Activated CD4-positive, alpha-beta T cell treated with anti-CD3 and anti-CD28 coated beads for 36 hours (primary cell): ENCODE measurements at regions of chr15 and their contacts with region 1.

Region 1: DNA sequence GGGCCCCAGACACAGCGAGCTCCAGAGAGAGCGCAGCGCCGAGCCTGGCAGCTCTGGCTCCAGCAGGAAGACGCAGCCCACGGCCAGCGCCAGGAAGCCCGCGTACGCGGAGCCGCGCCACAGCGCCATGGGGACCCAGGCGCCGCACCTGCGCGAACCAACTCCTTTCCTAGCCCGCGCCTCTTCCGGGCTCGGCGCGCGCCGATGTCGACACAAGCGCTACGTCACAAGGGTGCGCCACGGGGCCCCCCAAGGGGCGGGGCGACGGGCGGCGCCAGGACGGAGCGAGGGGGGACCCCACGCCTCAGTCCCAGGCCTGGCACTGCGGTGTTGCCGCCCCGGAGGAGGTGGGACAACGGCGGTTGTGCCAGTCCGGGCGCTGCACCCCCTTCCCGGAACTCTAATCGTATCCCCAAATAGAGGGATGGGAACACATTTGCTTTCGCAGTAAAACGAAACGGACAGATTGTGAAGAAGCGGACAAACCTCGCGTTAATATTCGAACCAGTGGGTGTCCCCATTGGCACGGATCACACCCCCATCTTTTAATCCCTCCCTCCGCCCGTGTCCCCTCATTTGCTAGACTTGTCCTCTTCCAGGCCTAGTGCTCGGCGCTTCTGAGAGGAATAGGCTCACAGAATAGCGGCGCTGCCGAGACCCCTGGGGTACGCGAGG is at the start of gene ADPGK:
- DNase-seq: peak; percentile 95
- ATAC-seq: peak; percentile 80
- H3K4me3 Mint-ChIP-seq: peak within 1 kb of the TSS; percentile 97
- H3K27ac Mint-ChIP-seq: peak within 1 kb of the TSS; percentile 99
- H3K4me1 Mint-ChIP-seq: peaks cover 60% of the 10 kb centered on the region
- H3K27me3 Mint-ChIP-seq: no peaks in the 10 kb centered on the region
- total RNA-seq, gene ADPGK: 58.0 to 70.8 TPM

Region 2: GRCh38 chr15:72375847-72376581 is 407.7 kb before region 1 on chr15 and contains the start of gene HEXA:
- CTCF ChIA-PET with region 1: no interaction called
- POLR2A ChIA-PET with region 1: no interaction called
- intact Hi-C with region 1: loop called in 1 of 2 experiments (anchors 1 kb)
- DNase-seq: peak; percentile 99
- ATAC-seq: peak; percentile 83
- H3K4me3 Mint-ChIP-seq: peak within 1 kb of the TSS; percentile 89
- H3K27ac Mint-ChIP-seq: peak within 1 kb of the TSS; percentile 96
- H3K4me1 Mint-ChIP-seq: peaks cover 45% of the 10 kb centered on the region
- H3K27me3 Mint-ChIP-seq: no peaks in the 10 kb centered on the region
- total RNA-seq, gene HEXA: 38.8 to 54.2 TPM

Region 3: DNA sequence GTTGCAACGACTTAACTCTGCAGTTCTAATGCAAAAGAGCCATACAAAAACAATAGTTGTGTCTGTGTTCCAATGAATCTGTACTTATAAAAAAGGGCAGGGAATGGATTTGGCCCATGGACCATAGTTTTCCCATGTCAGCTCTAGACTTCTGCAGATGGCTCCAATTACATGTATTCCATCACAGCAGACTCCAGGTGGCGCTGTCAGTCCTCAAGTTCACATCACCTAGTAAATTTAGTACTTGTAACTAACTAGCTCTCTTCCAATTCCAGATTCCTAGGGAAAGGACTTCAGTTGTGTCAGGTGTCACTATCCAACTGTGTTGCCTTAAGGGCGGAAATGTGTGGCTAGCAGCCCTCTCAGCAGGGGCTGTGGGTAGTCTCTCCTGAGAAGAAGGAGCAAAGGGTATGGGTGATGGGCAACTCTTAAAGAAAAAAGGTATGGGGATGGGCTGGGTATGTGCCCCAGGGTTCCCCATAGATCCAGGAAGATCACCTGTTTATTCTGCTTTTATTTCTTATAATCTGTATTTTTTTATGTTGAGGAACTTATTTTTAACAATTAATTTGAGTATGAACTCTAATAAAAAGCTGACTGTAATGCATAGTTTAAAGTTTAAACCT is 61.5 kb before region 1 on chr15:
- CTCF ChIA-PET with region 1: interaction called, 5 read pairs
- POLR2A ChIA-PET with region 1: no interaction called
- intact Hi-C with region 1: loop called (anchors 1 kb)
- DNase-seq: peak; percentile 85
- ATAC-seq: peak; percentile 42
- H3K4me3 Mint-ChIP-seq: no peak overlapping the region
- H3K27ac Mint-ChIP-seq: no peak overlapping the region
- H3K4me1 Mint-ChIP-seq: no peaks in the 10 kb centered on the region
- H3K27me3 Mint-ChIP-seq: no peaks in the 10 kb centered on the region

Region 4: GRCh38 chr15:72796515-72797337 is 13.0 kb after region 1 on chr15:
- CTCF ChIA-PET with region 1: interaction called, 14 read pairs
- POLR2A ChIA-PET with region 1: interaction called, 3 read pairs
- intact Hi-C with region 1: loop called in 1 of 2 experiments (anchors 2 kb)
- DNase-seq: peak; percentile 58
- ATAC-seq: peak; percentile 82
- H3K4me3 Mint-ChIP-seq: peak overlapping the region; percentile 67
- H3K27ac Mint-ChIP-seq: no peak overlapping the region
- H3K4me1 Mint-ChIP-seq: peaks cover 9% of the 10 kb centered on the region
- H3K27me3 Mint-ChIP-seq: peaks cover 24% of the 10 kb centered on the region

Region 5: DNA sequence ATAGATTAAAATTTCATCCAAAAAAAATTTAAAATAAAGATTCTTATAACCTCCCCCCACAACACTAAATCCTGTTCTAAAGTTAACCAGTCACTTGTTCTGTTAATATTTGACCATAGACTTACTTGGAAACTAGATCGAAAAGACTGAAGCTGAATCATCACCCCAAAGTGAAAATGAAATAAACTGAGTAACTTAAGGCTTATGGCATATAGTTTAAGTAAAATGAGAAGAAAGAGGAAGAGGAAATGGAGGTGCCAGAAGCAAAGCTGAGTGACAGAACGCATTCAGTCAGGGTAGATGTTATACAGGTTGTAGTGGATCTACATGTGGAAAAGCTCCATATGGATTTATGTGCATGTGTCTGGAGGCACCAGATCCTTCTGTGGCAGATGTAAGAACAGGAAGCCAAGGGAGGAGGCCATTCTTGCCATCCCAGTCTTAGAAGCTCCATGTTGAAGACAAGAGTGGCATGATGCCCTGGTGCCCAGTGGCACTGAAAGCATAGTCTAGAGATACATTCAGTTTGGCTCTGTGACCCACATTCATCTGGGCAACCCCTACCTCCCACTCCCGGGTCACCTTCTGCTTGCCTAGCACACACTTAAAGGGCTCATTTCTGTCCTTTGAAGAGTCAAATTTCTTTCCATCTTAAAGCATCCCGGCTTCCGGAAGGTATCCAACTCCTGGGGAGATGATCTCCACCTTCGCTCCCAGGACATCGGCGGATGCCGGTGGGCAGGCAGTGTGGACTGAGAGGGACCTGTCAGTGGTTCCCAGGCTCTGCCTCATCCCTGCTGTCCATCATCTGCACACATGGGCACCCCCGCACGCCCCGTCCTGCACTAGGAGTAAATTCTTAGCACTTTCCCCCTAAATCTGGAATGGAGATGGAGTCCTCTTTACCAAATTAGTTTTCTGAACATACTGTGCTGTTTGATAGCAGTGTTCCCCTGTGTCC is 359.4 kb after region 1 on chr15:
- CTCF ChIA-PET with region 1: no interaction called
- POLR2A ChIA-PET with region 1: no interaction called
- intact Hi-C with region 1: loop called in 1 of 2 experiments (anchors 1 kb)
- DNase-seq: peak; percentile 12
- ATAC-seq: peak; percentile 81
- H3K4me3 Mint-ChIP-seq: no peak overlapping the region
- H3K27ac Mint-ChIP-seq: peak overlapping the region; percentile 87
- H3K4me1 Mint-ChIP-seq: peaks cover 43% of the 10 kb centered on the region
- H3K27me3 Mint-ChIP-seq: no peaks in the 10 kb centered on the region

Region 6: DNA sequence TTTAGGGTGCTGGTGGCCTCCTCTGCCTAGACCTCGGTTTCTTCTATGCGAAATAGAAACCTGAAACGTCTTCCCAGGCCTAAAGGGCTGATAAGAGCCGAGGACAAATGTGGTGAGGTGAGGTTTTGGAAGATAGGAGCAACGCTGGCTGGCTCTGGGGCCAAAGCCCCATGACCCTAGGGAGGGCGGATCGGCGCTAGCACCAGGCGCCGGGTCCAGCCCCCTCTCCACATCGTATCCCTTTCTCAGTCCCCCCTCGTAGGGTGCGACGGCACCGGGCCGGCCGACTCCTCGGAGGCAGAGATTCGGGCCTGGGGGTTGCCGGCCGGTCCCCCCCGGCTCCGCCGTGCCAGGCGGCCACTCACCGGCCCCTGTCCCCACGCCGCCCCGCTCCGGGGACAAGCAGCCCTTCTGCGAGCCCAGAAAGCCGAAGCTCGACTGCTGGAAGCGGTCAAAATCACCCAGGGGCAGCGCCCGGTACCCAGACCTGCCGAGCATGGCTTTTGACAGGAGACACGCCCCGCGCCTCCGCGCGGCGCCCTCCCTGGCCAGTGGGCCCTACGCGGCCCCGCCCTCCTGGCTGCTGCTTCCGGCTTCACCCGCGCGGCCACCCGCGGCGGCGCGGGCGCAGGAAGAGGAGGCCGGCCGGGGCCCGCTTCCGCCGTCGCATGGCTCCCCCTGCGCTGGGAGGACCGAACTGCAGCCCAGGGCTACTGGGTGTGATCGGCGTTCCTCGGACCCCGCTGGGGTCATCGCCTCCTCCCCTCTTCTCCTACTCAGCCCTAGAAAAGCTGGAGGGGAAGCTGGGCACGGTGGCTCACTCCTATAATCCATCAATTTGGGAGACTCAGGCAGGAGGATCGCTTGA is 1208.3 kb after region 1 on chr15 and contains the start of gene STOML1:
- CTCF ChIA-PET with region 1: interaction called, 3 read pairs
- POLR2A ChIA-PET with region 1: no interaction called
- intact Hi-C with region 1: loop called in 1 of 2 experiments (anchors 10 kb)
- DNase-seq: peak; percentile 96
- ATAC-seq: peak; percentile 74
- H3K4me3 Mint-ChIP-seq: peak within 1 kb of the TSS; percentile 74
- H3K27ac Mint-ChIP-seq: peak within 1 kb of the TSS; percentile 86
- H3K4me1 Mint-ChIP-seq: peaks cover 42% of the 10 kb centered on the region
- H3K27me3 Mint-ChIP-seq: no peaks in the 10 kb centered on the region
- total RNA-seq, gene STOML1: 6.3 to 7.1 TPM